ENCODE measurements at regions of chr1 and their contacts with region 1.

Region 1: DNA sequence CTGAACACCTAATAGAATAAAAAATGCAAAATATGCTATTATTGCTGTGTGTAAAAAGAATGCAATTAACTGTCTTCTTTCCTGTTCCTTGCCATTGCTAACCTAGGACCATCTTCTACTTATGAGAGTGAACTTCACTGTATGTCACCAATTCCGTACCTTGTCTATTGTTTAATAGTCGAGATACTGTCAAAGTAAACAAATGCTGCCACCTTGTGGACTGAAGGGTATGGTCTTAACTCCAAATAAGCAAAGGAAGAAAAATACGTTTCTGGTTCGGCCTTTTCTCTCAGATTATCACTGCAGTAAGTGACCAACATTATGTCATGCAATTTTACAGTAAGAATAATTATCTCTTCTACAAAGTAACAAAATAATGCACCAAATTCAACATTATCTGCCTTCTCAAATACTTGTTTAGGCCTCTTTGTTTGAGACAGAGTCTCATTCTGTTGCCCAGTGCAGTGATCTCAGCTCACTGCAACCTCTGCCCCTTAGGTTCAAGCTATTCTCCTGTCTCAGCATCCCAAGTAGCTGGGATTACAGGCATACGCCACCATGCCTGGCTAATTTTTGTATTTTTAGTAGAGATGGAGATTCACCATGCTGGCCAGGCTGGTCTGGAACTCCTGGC is 133.4 kb downstream of the COP1 start:
- DNase-seq: peak; percentile 7 to 9
- H3K4me3 ChIP-seq: no peak overlapping the region
- H3K27ac ChIP-seq: no peak overlapping the region
- H3K4me1 ChIP-seq: no peaks in the 10 kb centered on the region
- H3K27me3 ChIP-seq: no peaks in the 10 kb centered on the region
- CTCF ChIP-seq: peak in 5 of 6 experiments; percentile 29 to 57 (median 52)
- POLR2A ChIP-seq: no peak

Region 2: GRCh38 chr1:175481126-175482066 is 592.2 kb before region 1 on chr1:
- intact Hi-C with region 1: loop called (anchors 10 kb)
- DNase-seq: no peak
- H3K4me3 ChIP-seq: no peak overlapping the region
- H3K27ac ChIP-seq: no peak overlapping the region
- H3K4me1 ChIP-seq: no peaks in the 10 kb centered on the region
- H3K27me3 ChIP-seq: no peaks in the 10 kb centered on the region
- CTCF ChIP-seq: peak; percentile 11 to 49 (median 26)
- POLR2A ChIP-seq: no peak

Measured in thyroid gland (tissue), 4 donors.